Ovary (tissue), 10 donors: ENCODE measurements at regions of chrX and their contacts with region 1.

Region 1: GRCh38 chrX:47644557-47645091 is 5.7 kb downstream of the ELK1 start:
- DNase-seq: peak in 1 of 5 donors; percentile 21
- H3K4me3 ChIP-seq: no peak overlapping the region
- H3K27ac ChIP-seq: no peak overlapping the region
- H3K4me1 ChIP-seq: peaks cover 2% of the 10 kb centered on the region
- H3K27me3 ChIP-seq: no peaks in the 10 kb centered on the region
- CTCF ChIP-seq: peak; percentile 6 to 35 (median 31)
- EP300 ChIP-seq: no peak
- POLR2A ChIP-seq: no peak

Region 2: DNA sequence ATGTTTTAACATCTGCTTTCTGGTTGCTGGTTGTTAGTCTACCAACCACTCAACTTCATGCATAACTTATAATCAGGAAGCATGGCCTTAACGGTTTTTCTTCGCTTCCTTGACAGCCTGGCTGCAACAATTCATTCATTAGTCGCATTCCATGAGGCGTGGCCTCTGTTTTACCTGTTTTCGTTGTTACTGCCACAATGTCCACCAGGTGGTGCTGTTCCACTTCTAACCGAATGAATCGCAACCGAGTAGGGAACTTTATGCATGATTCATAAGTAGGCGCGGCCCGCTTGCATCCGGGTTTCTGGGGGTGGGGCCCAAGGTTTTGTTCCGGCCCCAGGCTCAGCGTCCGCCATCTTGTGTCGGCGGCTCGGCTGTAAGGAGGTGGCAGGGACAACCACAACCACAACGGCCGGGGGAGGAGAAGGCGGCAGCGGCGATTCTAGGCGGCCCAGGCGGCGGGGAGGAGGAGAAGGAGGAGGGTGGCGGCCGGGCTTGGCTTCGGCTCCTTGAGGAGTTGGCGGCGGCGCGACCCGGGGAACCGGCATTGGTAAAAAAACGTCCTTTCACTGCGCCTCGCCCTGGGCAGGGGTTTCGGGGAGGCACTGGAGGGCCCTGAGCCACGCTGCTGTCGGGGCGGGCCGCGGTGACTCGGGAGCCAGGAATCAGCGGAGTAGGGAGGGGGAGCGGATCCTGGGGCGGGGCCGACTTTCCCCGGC is 451.0 kb before region 1 on chrX and contains the start of gene UBA1:
- intact Hi-C with region 1: loop called in 1 of 4 experiments (anchors 10 kb)
- DNase-seq: peak; percentile 97 to 98 (median 97)
- H3K4me3 ChIP-seq: peak within 1 kb of the TSS; percentile 94
- H3K27ac ChIP-seq: peak within 1 kb of the TSS; percentile 84 to 87
- H3K4me1 ChIP-seq: peaks cover 4% of the 10 kb centered on the region
- H3K27me3 ChIP-seq: no peaks in the 10 kb centered on the region
- CTCF ChIP-seq: peak; percentile 73 to 95 (median 94)
- EP300 ChIP-seq: no peak
- POLR2A ChIP-seq: peak; percentile 92
- total RNA-seq, gene UBA1: 91.8 to 196 (median 177) TPM

Region 3: DNA sequence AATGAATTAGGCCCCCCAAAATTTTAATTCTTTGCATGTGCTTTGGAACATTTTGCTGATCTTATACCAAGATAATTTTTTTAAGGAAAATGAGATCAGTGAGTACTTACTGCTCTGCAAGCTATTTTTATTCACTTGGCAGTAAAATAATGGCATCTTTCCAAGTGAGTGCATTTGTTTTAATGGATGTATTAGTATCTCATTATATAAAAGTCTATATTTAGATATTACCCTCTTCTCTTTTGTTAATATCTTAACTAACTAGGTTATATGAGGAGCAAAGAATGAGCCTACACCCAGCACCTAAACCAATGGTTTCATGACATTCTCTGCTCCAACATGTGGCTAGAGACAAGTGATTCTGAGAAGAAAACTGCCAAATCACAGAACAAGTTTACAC is 104.8 kb before region 1 on chrX:
- intact Hi-C with region 1: loop called in 2 of 4 experiments (anchors 10 kb)
- DNase-seq: no peak
- H3K4me3 ChIP-seq: no peak overlapping the region
- H3K27ac ChIP-seq: no peak overlapping the region
- H3K4me1 ChIP-seq: no peaks in the 10 kb centered on the region
- H3K27me3 ChIP-seq: no peaks in the 10 kb centered on the region
- CTCF ChIP-seq: no peak
- EP300 ChIP-seq: no peak
- POLR2A ChIP-seq: no peak

Region 4: GRCh38 chrX:47573394-47574075 is 71.1 kb before region 1 on chrX:
- intact Hi-C with region 1: loop called in 1 of 4 experiments (anchors 10 kb)
- DNase-seq: peak; percentile 77 to 86 (median 83)
- H3K4me3 ChIP-seq: peak overlapping the region; percentile 31
- H3K27ac ChIP-seq: peak overlapping the region; percentile 78 to 90
- H3K4me1 ChIP-seq: peaks cover 7% of the 10 kb centered on the region
- H3K27me3 ChIP-seq: no peaks in the 10 kb centered on the region
- CTCF ChIP-seq: no peak
- EP300 ChIP-seq: no peak
- POLR2A ChIP-seq: no peak

Region 5: GRCh38 chrX:47628980-47629379 is 15.6 kb before region 1 on chrX:
- intact Hi-C with region 1: no loop called
- DNase-seq: no peak
- H3K4me3 ChIP-seq: no peak overlapping the region
- H3K27ac ChIP-seq: no peak overlapping the region
- H3K4me1 ChIP-seq: no peaks in the 10 kb centered on the region
- H3K27me3 ChIP-seq: no peaks in the 10 kb centered on the region
- CTCF ChIP-seq: no peak
- EP300 ChIP-seq: no peak
- POLR2A ChIP-seq: no peak